ENCODE measurements at regions of chr20 and their contacts with region 1.

Region 1: GRCh38 chr20:43448748-43449535 is 8.8 kb upstream of the SRSF6 start:
- DNase-seq: peak in 1 of 2 donors; percentile 39
- ATAC-seq: peak; percentile 69

Region 2: GRCh38 chr20:43691928-43692524 is 243.1 kb after region 1 on chr20:
- intact Hi-C with region 1: loop called in 1 of 2 experiments (anchors 10 kb)
- DNase-seq: peak; percentile 50 to 85
- ATAC-seq: peak; percentile 93

Region 3: DNA sequence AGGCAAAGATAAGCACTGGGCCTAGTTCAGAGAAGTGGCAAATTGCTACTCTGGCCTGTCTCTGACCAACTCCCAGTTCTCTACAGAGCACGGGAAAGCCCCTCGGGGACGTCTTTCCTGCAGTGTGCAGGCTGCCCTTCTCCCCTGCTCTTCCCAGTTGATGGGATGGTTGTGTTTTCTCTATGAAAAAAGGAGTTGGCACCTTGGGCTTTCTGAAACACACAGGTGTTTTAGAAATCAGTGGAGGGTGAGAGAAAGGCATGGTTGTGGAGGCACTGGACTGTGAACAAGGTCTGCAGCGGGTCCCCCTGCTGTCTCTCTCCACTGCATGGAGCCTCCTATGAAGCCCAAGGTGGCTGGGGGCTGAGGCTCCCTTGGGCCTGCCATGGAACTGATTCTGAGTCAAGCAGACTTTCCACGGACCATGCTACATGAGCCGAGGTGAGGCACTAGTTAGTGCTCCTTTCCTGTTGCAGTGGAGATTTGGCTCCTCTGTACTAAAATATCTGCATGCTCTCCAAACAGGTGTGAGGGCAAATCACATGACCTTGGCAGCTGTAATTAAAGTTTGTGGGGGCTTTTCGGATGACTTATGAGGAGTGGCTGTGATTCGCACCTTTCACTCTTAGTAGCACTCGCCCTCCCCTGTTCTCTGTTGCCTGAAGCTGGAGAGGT is 261.6 kb after region 1 on chr20:
- intact Hi-C with region 1: no loop called
- DNase-seq: no peak
- ATAC-seq: no peak

Measured in left colon (tissue), 2 donors.